ENCODE measurements at regions of chr1 and their contacts with region 1.

Region 1: GRCh38 chr1:28437934-28438699 is 67.7 kb upstream of the RCC1 start:
- DNase-seq: peak; percentile 17
- CTCF ChIP-seq: no peak

Region 2: DNA sequence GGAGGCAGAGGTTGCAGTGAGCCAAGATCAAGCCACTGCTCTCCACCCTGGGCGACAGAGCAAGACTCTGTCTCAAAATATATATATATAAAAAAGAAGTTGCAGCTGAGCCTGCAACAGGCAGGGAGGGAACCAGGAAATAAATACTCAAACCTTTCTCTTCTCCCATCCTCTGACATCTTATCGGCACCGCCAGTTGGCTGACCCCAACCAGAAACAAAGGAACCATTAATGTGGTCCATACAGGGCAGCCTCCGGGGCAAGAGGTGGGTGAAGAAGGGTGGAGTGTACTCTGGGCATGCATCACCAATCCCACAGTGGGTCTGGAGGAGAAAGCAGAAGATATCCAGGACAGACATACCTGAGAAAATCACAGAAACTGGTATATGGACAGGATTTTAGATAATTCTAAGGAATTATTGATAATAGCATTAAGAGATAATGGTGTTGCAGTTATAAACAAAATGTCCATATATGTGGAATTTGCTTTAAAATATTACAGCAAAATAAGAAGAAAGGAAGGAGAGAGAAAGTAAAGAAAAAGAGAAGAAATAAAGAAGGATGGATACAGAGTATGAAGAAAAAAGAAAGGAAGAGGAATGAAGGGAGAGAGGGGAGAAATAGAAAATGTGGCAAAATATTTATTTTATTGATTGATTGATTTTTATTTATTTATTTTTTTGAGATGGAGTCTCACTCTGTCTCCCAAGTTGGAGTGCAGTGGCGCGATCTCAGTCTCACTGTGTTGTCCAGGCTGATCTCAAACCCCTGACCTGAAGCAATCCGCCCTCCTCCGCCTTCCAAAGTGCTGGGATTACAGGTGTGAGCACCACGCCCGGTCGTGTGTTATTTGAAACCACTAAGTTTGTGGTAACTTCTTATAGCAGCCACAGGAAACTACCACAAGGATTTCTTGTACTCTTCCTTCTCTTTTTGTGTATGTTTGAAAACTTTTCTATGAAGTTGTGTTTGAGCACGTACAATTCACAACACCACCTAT is 257.5 kb before region 1 on chr1:
- CTCF ChIA-PET with region 1: no interaction called
- POLR2A ChIA-PET with region 1: no interaction called
- DNase-seq: no peak
- CTCF ChIP-seq: no peak

Region 3: GRCh38 chr1:28428012-28428411 is 10.1 kb before region 1 on chr1:
- CTCF ChIA-PET with region 1: interaction called, 12 read pairs
- POLR2A ChIA-PET with region 1: no interaction called
- DNase-seq: peak; percentile 49
- CTCF ChIP-seq: no peak

Region 4: DNA sequence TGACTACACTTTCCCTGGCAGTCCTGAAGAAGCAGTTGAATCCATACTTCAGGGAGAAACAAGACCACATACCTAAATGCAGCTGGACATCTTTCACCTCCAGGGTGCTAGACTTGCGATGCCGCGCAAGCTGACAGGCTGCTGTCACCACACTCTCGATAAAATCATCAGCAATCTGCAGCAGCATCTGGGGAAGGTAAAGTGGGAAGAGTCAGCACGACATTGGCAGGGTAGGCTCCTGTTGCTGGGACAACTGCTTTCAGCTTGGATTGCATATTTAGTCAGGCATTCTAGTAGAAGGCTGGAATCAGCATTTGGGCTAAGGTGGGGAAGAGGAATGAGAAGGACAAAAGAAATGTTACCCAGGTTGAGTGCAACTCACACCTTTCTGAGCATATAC is 175.1 kb after region 1 on chr1:
- CTCF ChIA-PET with region 1: no interaction called
- POLR2A ChIA-PET with region 1: no interaction called
- DNase-seq: no peak
- CTCF ChIP-seq: no peak

Measured in GM10248 (cell line).